MCF 10A (cell line): ENCODE measurements at regions of chr10 and their contacts with region 1.

Region 1: GRCh38 chr10:128870830-128871597 is 596.0 kb upstream of the MGMT start:
- DNase-seq: no peak
- H3K4me3 Mint-ChIP-seq: no peak overlapping the region
- H3K27ac Mint-ChIP-seq: no peak overlapping the region
- H3K4me1 Mint-ChIP-seq: peaks cover 3% of the 10 kb centered on the region
- H3K27me3 Mint-ChIP-seq: no peaks in the 10 kb centered on the region
- CTCF ChIP-seq: no peak

Region 2: DNA sequence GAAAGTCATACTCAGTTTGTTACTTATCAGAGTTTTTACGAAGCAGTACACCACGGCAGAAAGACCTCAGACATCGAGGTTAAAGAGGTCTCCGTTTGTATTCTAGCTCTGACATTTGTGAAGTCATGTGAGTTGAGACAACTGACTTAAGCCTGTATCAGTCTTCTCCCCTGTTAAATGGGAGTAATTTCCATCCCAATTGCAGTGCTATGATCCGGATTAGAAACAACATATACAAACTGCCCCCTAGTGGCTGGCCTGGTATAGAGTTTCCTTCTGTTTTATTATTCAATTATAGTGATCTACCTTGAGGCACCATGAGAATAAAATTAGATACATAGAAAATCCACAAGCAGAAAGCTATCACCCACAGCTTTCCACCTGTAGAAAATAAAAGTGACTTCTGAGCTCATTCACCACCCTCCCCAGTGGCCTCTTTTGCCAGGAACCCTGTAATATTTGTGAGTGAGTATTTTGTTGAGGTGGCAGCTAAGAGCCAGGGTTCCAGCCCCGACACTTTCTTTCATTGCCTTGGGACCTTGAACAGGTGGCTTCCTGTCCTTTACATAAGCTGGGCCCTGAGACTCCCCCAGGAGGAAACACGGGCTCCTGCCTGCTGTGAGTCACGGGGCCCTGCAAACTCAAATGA is 11.2 kb before region 1 on chr10:
- CTCF ChIA-PET with region 1: interaction called, 16 read pairs
- POLR2A ChIA-PET with region 1: no interaction called
- intact Hi-C with region 1: no loop called
- DNase-seq: peak; percentile 63
- H3K4me3 Mint-ChIP-seq: no peak overlapping the region
- H3K27ac Mint-ChIP-seq: no peak overlapping the region
- H3K4me1 Mint-ChIP-seq: peaks cover 3% of the 10 kb centered on the region
- H3K27me3 Mint-ChIP-seq: no peaks in the 10 kb centered on the region
- CTCF ChIP-seq: peak; percentile 40

Region 3: DNA sequence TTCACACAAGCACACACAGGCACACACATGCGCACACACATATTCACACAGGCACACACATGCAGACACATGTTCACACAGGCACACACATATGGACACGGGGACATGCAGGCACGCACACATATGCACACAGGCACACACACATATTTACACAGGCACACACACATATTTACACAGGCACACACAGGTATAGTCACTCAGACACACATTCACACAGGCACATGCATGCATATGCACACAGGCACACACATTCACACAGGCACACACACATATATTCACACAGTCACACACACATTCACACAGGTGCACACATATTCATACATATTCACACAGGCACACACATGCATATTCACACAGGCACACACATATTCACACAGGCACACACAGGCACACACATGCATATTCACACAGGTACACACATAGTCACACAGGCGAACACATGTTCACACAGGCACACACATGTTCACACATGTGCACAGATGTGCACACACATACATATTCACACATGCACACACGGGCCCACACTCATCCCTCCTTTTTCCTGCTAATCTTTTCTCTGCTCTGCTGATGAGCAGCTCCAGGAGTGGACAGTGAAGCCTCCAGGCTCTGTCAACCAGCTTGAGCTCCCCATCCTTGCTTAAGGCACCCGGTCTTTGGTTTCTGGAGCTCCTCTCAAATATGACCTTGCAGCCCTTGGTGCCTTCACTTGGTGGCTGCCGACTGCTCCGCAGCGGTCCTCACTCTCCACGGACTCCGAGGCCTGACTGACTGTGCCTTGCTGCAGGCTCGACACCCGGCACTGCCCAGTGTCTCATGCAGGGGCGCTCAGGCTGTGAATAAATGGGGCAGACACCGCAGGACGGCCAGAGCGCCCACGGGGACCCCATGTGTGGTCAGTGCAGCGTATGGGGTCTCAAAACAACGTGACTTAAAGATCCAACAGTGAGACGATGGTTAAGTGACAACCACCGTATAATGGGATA is 14.8 kb after region 1 on chr10:
- CTCF ChIA-PET with region 1: no interaction called
- POLR2A ChIA-PET with region 1: no interaction called
- intact Hi-C with region 1: no loop called
- DNase-seq: no peak
- H3K4me3 Mint-ChIP-seq: no peak overlapping the region
- H3K27ac Mint-ChIP-seq: no peak overlapping the region
- H3K4me1 Mint-ChIP-seq: no peaks in the 10 kb centered on the region
- H3K27me3 Mint-ChIP-seq: no peaks in the 10 kb centered on the region
- CTCF ChIP-seq: no peak